ENCODE measurements at regions of chr5 and their contacts with region 1.

Region 1: DNA sequence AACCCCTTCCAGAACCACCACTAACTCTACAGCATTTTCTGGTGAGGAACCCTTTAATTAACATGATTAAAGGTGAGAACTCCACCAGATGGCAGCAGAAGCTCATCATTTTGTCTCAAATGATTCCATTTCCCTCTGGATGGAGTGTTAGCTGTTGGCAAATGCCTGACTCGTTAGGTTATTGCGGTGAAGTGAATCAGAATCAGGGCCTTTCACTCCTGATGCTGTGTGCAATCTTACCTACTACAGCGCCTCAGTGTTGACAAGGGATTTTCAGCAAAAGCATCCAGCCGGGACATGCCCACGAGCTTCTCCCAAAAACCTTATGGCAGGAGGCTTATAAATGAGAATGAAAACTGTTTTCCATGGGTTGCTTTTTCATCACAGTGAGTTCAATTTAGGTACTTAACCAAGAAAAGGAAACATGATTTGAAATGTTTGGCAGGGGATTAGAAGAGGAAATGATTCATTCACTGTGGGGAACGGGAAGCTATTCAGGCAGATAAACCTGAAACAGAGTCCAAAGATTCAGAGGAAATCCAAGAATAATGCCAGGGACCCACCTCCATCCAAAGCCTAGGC is 48.0 kb upstream of the CAST start:
- DNase-seq: peak; percentile 73 to 82
- H3K4me3 ChIP-seq: no peak overlapping the region
- H3K4me3 Mint-ChIP-seq: no peak overlapping the region
- H3K27ac Mint-ChIP-seq: peak overlapping the region; percentile 8
- H3K4me1 ChIP-seq: peaks cover 7% of the 10 kb centered on the region
- H3K4me1 Mint-ChIP-seq: no peaks in the 10 kb centered on the region
- H3K27me3 ChIP-seq: no peaks in the 10 kb centered on the region
- H3K27me3 Mint-ChIP-seq: no peaks in the 10 kb centered on the region
- CTCF ChIP-seq: peak; percentile 33 to 82

Region 2: GRCh38 chr5:96662725-96663513 is 48.7 kb after region 1 on chr5:
- CTCF ChIA-PET with region 1: interaction called, 13 read pairs
- POLR2A ChIA-PET with region 1: interaction called, 5 read pairs
- intact Hi-C with region 1: loop called (anchors 1 kb)
- DNase-seq: peak; percentile 89 to 93
- H3K4me3 ChIP-seq: peak overlapping the region; percentile 90
- H3K4me3 Mint-ChIP-seq: peak overlapping the region; percentile 81
- H3K27ac Mint-ChIP-seq: peak overlapping the region; percentile 86
- H3K4me1 ChIP-seq: peaks cover 45% of the 10 kb centered on the region
- H3K4me1 Mint-ChIP-seq: peaks cover 34% of the 10 kb centered on the region
- H3K27me3 ChIP-seq: no peaks in the 10 kb centered on the region
- H3K27me3 Mint-ChIP-seq: no peaks in the 10 kb centered on the region
- CTCF ChIP-seq: peak in 1 of 2 experiments; percentile 3

Region 3: DNA sequence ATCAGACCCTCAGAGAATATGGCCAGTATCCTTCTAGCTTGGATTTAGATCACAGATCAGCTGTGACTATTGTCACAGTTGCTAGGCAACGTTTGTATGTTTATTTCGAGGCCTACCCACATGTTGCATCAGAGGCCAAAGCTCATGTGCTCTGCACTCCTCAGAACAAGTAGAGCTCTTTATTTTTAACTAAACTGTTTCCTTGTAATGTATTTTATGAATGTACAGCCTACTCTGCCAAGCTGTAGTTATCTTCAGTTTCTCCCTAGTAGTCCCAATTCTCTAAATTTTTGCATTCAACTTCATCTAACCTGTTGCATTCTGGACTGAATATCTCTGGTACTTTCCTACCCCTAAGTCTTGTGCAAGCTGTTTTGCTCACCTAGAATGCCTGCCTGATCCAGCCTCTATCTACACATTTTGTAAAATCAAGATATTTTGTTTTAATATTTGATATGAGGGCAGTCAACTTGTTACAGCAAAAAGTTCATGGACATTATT is 100.8 kb after region 1 on chr5:
- CTCF ChIA-PET with region 1: interaction called, 11 read pairs
- POLR2A ChIA-PET with region 1: no interaction called
- intact Hi-C with region 1: no loop called
- DNase-seq: peak; percentile 72 to 83
- H3K4me3 ChIP-seq: no peak overlapping the region
- H3K4me3 Mint-ChIP-seq: peak overlapping the region; percentile 34
- H3K27ac Mint-ChIP-seq: peak overlapping the region; percentile 92
- H3K4me1 ChIP-seq: peaks cover 36% of the 10 kb centered on the region
- H3K4me1 Mint-ChIP-seq: peaks cover 53% of the 10 kb centered on the region
- H3K27me3 ChIP-seq: no peaks in the 10 kb centered on the region
- H3K27me3 Mint-ChIP-seq: no peaks in the 10 kb centered on the region
- CTCF ChIP-seq: no peak

Region 4: DNA sequence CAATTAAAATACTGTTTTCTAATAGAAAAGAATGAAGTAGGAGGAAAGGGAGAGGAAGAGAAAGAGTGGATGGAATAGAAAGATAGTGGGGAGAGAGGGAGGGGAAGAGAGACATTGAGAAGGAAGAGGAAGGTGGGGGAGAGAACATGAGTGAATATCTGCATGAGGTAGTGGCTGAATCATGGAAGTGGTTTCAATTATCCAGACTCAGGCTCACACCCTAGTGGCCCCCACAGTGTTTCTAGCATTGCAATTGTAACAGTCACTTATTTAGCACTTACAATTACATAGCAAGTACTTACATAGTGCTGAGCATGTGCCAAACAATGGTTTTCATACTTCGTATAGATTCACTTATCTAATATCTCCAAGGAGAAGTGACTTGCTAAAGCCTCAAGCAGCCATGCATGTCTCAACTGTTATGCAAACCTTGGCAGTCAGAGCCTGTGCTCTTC is 120.7 kb after region 1 on chr5:
- CTCF ChIA-PET with region 1: interaction called, 4 read pairs
- POLR2A ChIA-PET with region 1: no interaction called
- intact Hi-C with region 1: loop called (anchors 1 kb)
- DNase-seq: no peak
- H3K4me3 ChIP-seq: no peak overlapping the region
- H3K4me3 Mint-ChIP-seq: no peak overlapping the region
- H3K27ac Mint-ChIP-seq: no peak overlapping the region
- H3K4me1 ChIP-seq: peaks cover 18% of the 10 kb centered on the region
- H3K4me1 Mint-ChIP-seq: peaks cover 22% of the 10 kb centered on the region
- H3K27me3 ChIP-seq: no peaks in the 10 kb centered on the region
- H3K27me3 Mint-ChIP-seq: no peaks in the 10 kb centered on the region
- CTCF ChIP-seq: no peak

Region 5: GRCh38 chr5:96823900-96824351 is 209.7 kb after region 1 on chr5:
- CTCF ChIA-PET with region 1: no interaction called
- POLR2A ChIA-PET with region 1: no interaction called
- intact Hi-C with region 1: loop called (anchors 5 kb)
- DNase-seq: peak in 1 of 2 experiments; percentile 24
- H3K4me3 ChIP-seq: no peak overlapping the region
- H3K4me3 Mint-ChIP-seq: no peak overlapping the region
- H3K27ac Mint-ChIP-seq: no peak overlapping the region
- H3K4me1 ChIP-seq: peaks cover 11% of the 10 kb centered on the region; the same call in 1 of the 2 replicates
- H3K4me1 Mint-ChIP-seq: peaks cover 13% of the 10 kb centered on the region
- H3K27me3 ChIP-seq: no peaks in the 10 kb centered on the region; the same call in 1 of the 2 replicates
- H3K27me3 Mint-ChIP-seq: no peaks in the 10 kb centered on the region
- CTCF ChIP-seq: no peak

Region 6: GRCh38 chr5:97162045-97162444 is 547.8 kb after region 1 on chr5:
- CTCF ChIA-PET with region 1: no interaction called
- POLR2A ChIA-PET with region 1: no interaction called
- intact Hi-C with region 1: loop called (anchors 1 kb)
- DNase-seq: peak; percentile 70 to 78
- H3K4me3 ChIP-seq: no peak overlapping the region
- H3K4me3 Mint-ChIP-seq: no peak overlapping the region
- H3K27ac Mint-ChIP-seq: no peak overlapping the region
- H3K4me1 ChIP-seq: peaks cover 14% of the 10 kb centered on the region
- H3K4me1 Mint-ChIP-seq: peaks cover 5% of the 10 kb centered on the region
- H3K27me3 ChIP-seq: no peaks in the 10 kb centered on the region
- H3K27me3 Mint-ChIP-seq: no peaks in the 10 kb centered on the region
- CTCF ChIP-seq: peak; percentile 85 to 89